Activated CD4-positive, alpha-beta T cell treated with anti-CD3 and anti-CD28 coated beads for 36 hours (primary cell): ENCODE measurements at regions of chr6 and their contacts with region 1.

Region 1: DNA sequence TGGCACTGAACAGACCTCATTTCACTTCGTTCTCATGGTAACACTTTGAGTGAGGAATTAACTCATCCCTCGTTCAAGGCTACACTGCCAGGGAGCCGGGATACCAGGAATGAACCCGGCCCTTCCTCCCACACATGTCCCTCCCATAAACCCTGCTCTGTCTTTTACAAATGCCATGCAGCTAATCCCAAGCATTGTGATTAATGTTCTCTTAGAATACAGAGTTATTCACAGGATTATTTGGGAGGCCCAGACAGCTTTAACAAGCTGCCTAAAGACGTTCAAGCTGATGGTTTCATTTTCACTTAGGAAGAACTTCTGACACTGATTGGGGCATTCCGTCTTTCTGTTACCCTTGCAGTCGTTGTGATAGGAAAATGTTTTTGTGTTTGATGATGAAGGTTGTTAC is 42.5 kb upstream of the CD83 start:
- DNase-seq: no peak
- ATAC-seq: peak; percentile 82
- H3K4me3 Mint-ChIP-seq: peak overlapping the region; percentile 66
- H3K27ac Mint-ChIP-seq: peak overlapping the region; percentile 92
- H3K4me1 Mint-ChIP-seq: peaks cover 59% of the 10 kb centered on the region
- H3K27me3 Mint-ChIP-seq: no peaks in the 10 kb centered on the region

Region 2: GRCh38 chr6:12383448-12383847 is 1691.7 kb before region 1 on chr6:
- CTCF ChIA-PET with region 1: no interaction called
- POLR2A ChIA-PET with region 1: no interaction called
- intact Hi-C with region 1: no loop called
- DNase-seq: no peak
- ATAC-seq: no peak
- H3K4me3 Mint-ChIP-seq: no peak overlapping the region
- H3K27ac Mint-ChIP-seq: no peak overlapping the region
- H3K4me1 Mint-ChIP-seq: no peaks in the 10 kb centered on the region
- H3K27me3 Mint-ChIP-seq: peaks cover 12% of the 10 kb centered on the region

Region 3: DNA sequence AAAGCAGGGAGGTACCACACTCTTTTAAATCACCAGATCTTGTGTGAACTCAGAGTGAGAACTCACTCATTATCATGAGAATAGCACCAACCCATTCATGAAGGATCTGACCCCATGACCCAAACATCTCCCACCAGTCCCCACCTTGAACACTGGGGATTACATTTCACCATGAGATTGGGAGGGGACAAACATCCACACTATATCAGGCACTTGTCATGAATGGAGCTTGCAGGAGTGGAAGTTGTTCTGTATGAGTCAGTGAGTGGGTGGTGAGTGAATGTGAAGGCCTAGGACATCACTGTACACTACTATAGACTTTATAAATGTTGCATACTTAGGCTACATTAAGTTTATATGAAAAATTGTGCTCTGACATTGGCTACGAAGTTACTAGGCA is 198.0 kb before region 1 on chr6:
- CTCF ChIA-PET with region 1: no interaction called
- POLR2A ChIA-PET with region 1: no interaction called
- intact Hi-C with region 1: no loop called
- DNase-seq: no peak
- ATAC-seq: no peak
- H3K4me3 Mint-ChIP-seq: no peak overlapping the region
- H3K27ac Mint-ChIP-seq: no peak overlapping the region
- H3K4me1 Mint-ChIP-seq: peaks cover 8% of the 10 kb centered on the region
- H3K27me3 Mint-ChIP-seq: peaks cover 5% of the 10 kb centered on the region

Region 4: DNA sequence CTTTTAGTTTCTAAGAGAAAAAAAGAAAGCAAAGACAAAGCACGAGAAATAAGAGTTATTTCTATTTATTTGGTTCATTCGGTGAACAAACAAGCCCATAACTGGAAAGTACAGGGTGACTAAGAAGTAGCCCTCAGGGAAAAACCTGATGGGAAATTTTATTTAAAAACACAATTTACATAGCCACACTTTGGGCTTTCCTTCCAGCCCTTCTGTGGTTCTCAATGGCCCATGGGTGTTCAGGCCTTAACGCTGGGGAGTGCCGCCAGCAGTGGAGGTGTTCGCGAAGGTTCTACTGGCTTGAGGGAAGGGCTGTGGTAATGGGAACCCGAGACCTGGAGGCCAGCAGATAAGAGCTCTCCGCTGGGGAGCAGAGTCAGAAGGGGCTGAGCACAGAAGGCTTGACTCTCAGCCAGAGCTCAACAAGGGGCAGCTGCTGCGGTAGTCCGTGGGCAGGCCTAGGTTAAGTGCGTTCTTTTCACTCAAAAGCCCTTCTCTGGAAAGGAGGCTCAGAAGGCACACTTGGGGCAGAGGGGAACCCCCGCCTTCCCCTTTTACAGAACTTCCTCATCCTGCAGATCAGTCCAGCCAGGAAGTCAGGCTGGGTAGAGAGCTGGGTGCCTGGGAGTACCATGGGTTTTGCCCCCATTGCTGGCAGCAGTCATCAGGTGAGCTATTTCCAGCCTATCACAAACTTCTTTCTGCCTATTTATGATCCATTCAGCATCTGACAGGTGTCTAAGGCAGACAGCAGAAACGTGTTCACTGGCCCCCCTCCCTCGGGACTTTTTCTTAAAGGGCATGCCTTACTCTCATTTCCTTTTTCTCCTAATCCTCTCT is 33.7 kb after region 1 on chr6:
- CTCF ChIA-PET with region 1: no interaction called
- POLR2A ChIA-PET with region 1: no interaction called
- intact Hi-C with region 1: loop called in 1 of 2 experiments (anchors 2 kb)
- DNase-seq: peak; percentile 59
- ATAC-seq: peak; percentile 60
- H3K4me3 Mint-ChIP-seq: peak overlapping the region; percentile 17
- H3K27ac Mint-ChIP-seq: peak overlapping the region; percentile 70
- H3K4me1 Mint-ChIP-seq: peaks cover 32% of the 10 kb centered on the region
- H3K27me3 Mint-ChIP-seq: no peaks in the 10 kb centered on the region

Region 5: DNA sequence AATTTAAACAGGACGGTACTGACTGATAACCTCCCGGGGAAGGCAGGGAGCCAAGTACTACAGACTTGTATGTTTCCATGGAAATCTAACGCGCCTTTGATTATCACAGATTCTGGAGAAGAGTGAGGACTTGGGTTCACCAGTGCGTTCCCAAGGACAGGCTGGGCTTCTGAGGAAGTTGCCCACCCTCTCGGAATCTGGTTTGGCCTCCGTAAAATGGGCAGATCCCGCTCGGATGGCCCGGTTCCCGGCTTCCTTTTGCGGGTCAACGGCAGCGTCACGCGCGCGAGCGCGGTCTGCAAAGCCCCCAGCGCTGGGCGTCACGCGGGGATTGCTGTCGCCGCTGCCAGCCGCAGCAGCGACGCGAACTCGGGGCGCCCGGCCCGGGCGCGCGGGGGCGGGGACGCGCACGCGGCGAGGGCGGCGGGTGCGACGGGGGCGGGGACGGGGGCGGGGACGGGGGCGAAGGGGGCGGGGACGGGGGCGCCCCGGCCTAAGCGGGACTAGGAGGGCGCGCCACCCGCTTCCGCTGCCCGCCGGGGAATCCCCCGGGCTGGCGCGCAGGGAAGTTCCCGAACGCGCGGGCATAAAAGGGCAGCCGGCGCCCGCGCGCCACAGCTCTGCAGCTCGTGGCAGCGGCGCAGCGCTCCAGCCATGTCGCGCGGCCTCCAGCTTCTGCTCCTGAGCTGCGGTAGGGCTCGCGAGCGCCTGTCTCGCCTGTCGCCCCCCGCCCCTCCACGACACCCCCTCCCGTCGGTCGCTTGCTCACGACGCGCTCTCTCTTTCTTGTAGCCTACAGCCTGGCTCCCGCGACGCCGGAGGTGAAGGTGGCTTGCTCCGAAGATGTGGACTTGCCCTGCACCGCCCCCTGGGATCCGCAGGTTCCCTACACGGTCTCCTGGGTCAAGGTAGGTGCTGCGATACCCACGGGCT is 42.3 kb after region 1 on chr6 and contains the start of gene CD83:
- CTCF ChIA-PET with region 1: interaction called, 3 read pairs
- POLR2A ChIA-PET with region 1: interaction called, 4 read pairs
- intact Hi-C with region 1: loop called (anchors 1 to 2 kb)
- DNase-seq: peak; percentile 86
- ATAC-seq: peak; percentile 83
- H3K4me3 Mint-ChIP-seq: peak within 1 kb of the TSS; percentile 99
- H3K27ac Mint-ChIP-seq: peak within 1 kb of the TSS; percentile 94
- H3K4me1 Mint-ChIP-seq: peaks cover 43% of the 10 kb centered on the region
- H3K27me3 Mint-ChIP-seq: no peaks in the 10 kb centered on the region
- total RNA-seq, gene CD83: 22.0 to 22.9 TPM